ENCODE measurements at regions of chr3 and their contacts with region 1.

Region 1: GRCh38 chr3:58008140-58009025 is at the start of gene FLNB:
- DNase-seq: peak; percentile 93
- H3K4me3 Mint-ChIP-seq: peak within 1 kb of the TSS; percentile 91
- H3K27ac Mint-ChIP-seq: peak within 1 kb of the TSS; percentile 87
- H3K4me1 Mint-ChIP-seq: peaks cover 33% of the 10 kb centered on the region
- H3K27me3 Mint-ChIP-seq: no peaks in the 10 kb centered on the region
- total RNA-seq, gene FLNB: 22.8 and 23.9 TPM in 2 replicates

Region 2: DNA sequence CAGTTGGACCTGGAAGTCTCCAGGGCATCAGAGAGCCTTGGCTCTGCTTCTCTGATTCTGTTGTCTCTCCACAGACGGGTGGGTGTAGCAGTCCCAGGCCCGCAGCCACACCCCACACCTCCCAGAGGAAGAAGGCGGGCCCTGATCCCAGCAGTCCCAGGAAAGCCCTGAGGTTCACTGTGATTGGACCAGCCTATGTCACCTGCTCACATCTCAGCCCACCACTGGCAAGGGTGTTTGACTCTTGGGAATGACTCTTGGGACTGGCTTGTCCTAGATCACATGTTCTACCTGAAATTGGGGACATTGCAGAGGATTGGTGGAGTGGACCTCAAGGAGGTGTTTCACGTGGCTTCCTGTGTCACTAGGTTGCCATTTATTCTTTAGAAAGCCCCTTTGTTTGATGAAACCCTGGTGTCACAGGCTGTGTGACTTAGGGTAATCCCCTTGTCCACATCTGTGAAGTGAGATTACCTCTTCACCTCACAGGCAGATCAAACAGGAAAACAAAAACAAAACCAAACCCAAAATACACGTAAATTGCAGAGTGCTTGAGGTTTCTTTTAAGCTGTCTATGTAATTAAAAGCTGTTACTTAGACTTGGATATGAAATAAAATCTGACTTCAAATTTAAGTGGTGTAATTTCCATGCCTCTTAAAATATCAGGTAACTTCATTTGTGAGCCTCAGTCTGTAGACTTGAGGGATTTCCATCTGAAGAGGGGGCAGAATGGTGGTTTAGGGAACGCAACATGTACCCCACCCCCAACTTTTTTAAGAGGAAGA is 26.5 kb after region 1 on chr3:
- intact Hi-C with region 1: loop called (anchors 1 kb)
- DNase-seq: peak; percentile 90
- H3K4me3 Mint-ChIP-seq: peak overlapping the region; percentile 70
- H3K27ac Mint-ChIP-seq: peak overlapping the region; percentile 82
- H3K4me1 Mint-ChIP-seq: peaks cover 50% of the 10 kb centered on the region
- H3K27me3 Mint-ChIP-seq: no peaks in the 10 kb centered on the region

Region 3: DNA sequence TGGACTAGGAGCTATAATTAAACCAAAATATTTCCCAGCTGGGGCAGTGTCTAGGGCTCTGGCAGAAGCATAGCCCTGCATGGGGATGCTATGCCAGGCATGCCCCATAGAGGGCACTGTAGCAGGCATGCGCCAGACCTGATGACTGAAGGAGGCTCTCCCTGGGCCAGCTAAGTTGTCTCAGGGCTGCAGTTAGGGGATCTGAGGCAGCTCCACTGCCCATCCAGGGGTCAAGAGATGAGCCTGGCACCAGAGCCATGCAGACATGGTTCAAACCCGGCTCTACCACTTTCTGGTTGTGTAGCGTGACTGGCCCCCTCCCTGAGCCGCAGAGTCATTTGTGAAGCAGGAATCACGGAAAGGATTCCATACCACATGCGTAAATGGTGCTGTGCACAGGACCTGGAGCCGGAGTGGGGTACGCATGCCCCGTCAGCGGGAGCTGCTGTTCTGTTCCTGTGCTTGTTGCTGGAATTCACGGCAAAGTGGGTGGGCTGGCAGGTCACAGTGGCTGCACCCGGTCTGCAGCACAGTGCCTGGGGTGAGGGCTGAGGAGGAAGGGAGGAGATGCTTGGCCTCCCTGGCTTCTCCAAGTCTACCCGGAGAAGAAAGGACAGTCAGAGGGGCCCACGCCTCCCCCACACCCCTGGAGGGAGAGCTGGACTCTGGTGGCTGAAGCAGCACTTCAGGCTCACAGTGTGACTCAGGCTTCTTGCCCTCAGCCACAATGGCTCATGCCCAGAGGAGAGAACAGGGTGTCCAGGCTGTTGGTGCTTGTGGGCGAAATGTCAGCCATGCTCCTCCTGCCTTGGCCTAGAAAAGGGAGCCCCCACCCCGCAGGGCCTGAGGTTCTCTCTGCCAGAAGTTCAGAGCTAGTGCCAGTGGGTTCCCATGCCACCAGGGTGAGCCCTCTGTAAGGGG is 159.3 kb after region 1 on chr3:
- intact Hi-C with region 1: loop called (anchors 1 kb)
- DNase-seq: peak; percentile 90
- H3K4me3 Mint-ChIP-seq: no peak overlapping the region
- H3K27ac Mint-ChIP-seq: no peak overlapping the region
- H3K4me1 Mint-ChIP-seq: no peaks in the 10 kb centered on the region
- H3K27me3 Mint-ChIP-seq: no peaks in the 10 kb centered on the region

Region 4: DNA sequence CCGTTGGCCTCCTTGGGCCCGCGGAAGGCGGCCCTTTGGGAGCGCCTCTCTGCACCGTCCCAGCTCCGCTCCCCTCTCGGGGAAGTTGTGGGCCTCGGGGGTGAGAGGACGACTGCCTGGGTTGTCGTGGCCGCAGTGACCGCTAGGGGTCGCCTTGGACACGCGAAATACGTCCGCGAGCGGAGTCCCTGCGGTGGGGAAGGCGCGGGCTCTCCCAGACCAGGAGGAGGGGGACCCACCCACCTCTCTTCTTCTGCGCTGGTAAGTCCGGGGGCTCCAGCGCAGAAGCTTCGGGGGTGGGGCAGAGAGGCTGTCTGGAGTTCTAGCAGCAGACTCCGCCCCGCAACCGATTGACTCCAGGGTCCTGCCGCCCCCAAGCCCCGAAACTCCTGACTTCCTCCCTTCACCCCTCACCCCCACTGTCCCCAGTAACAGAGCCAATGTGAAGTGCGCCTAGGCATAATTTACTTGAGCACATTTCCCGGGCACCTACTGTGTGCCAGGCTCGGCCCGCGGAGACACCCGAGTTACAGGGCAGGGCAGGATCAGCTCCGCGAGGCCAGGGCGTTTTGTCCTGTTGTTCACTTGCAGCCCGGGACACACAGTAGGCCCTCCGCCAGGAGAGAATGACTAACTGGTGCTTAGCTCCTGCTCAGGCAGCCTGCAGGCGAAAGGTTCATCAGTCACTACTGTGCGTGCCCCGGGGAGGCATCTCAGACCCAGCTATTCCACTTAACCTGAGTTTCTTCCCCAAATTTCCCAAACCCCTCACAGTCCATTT is 169.6 kb after region 1 on chr3:
- intact Hi-C with region 1: loop called (anchors 1 kb)
- DNase-seq: peak; percentile 97
- H3K4me3 Mint-ChIP-seq: peak overlapping the region; percentile 81
- H3K27ac Mint-ChIP-seq: no peak overlapping the region
- H3K4me1 Mint-ChIP-seq: peaks cover 15% of the 10 kb centered on the region
- H3K27me3 Mint-ChIP-seq: peaks cover 9% of the 10 kb centered on the region